Activated T-helper 2 cell treated with anti-CD3 and anti-CD28 coated beads, Interferon-gamma antibody, Interleukin-2, Interleukin-4, amounts not matched to agents 10 μg/mL and 5 μg/mL and 100 μg/mL, durations not matched to agents 14 hours and 24 hours and 36 hours (primary cell): ENCODE measurements at regions of chr21 and their contacts with region 1.

Region 1: DNA sequence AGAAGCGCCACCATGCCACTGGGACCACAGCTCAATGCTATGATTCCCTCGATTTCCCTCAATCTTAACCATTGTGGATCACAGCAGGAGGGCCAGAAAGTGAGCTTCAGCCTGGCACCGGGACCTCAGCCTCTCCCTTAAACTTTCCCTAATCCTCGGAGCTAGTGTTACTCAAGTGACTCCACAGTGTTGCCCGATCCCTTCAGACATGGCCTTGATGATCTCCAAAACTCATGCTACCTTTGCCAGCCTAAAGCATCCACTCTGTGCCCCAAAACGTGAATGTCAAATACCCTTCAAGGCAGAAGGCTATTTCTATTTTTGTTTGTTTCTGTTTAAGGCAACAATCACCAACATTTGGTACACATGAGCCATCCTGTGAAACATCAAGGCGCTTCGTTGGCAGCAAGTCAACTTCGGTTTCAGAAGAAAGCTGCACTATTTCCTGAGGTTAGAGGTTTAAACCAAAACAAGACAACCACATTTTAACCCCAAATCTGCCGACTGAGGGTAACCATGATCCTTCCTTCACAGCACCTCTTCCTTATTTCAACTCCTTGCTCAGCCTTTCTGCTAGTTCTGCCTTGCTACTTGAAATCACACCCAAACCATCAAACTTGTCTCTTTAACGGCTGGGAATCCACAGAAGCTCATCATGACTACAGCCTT is 94.4 kb upstream of the KRTAP19-8 start:
- DNase-seq: peak; percentile 69
- H3K4me3 Mint-ChIP-seq: peak overlapping the region; percentile 70
- H3K27ac Mint-ChIP-seq: peak overlapping the region; percentile 98
- H3K4me1 Mint-ChIP-seq: peaks cover 72% of the 10 kb centered on the region
- H3K27me3 Mint-ChIP-seq: no peaks in the 10 kb centered on the region

Region 2: DNA sequence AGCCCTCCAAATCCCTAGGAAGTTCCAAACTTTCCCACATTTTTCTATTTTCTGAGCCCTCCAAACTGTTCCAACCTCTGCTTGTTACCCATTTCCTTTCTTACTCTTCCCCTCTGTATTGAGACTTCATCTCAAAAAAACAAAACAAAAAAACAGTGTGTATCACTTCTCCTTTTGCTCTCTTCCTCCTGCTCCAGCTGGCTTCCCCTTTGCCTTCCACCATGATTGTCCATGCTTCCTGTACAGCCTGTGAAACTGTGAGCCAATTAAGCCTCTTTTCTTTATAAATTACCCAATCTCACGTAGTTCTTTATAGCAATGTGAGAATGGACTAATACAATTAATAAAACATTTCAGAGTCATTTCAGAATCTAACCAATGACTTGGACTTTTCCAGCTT is 24.8 kb before region 1 on chr21:
- intact Hi-C with region 1: loop called (anchors 1 kb)
- DNase-seq: no peak
- H3K4me3 Mint-ChIP-seq: no peak overlapping the region
- H3K27ac Mint-ChIP-seq: no peak overlapping the region
- H3K4me1 Mint-ChIP-seq: peaks cover 38% of the 10 kb centered on the region
- H3K27me3 Mint-ChIP-seq: no peaks in the 10 kb centered on the region

Region 3: GRCh38 chr21:31161157-31161556 is 28.4 kb after region 1 on chr21:
- intact Hi-C with region 1: loop called (anchors 2 kb)
- DNase-seq: no peak
- H3K4me3 Mint-ChIP-seq: no peak overlapping the region
- H3K27ac Mint-ChIP-seq: no peak overlapping the region
- H3K4me1 Mint-ChIP-seq: peaks cover 58% of the 10 kb centered on the region
- H3K27me3 Mint-ChIP-seq: no peaks in the 10 kb centered on the region

Region 4: GRCh38 chr21:31198575-31198974 is 65.9 kb after region 1 on chr21:
- intact Hi-C with region 1: loop called (anchors 1 kb)
- DNase-seq: no peak
- H3K4me3 Mint-ChIP-seq: no peak overlapping the region
- H3K27ac Mint-ChIP-seq: no peak overlapping the region
- H3K4me1 Mint-ChIP-seq: peaks cover 39% of the 10 kb centered on the region
- H3K27me3 Mint-ChIP-seq: no peaks in the 10 kb centered on the region

Region 5: DNA sequence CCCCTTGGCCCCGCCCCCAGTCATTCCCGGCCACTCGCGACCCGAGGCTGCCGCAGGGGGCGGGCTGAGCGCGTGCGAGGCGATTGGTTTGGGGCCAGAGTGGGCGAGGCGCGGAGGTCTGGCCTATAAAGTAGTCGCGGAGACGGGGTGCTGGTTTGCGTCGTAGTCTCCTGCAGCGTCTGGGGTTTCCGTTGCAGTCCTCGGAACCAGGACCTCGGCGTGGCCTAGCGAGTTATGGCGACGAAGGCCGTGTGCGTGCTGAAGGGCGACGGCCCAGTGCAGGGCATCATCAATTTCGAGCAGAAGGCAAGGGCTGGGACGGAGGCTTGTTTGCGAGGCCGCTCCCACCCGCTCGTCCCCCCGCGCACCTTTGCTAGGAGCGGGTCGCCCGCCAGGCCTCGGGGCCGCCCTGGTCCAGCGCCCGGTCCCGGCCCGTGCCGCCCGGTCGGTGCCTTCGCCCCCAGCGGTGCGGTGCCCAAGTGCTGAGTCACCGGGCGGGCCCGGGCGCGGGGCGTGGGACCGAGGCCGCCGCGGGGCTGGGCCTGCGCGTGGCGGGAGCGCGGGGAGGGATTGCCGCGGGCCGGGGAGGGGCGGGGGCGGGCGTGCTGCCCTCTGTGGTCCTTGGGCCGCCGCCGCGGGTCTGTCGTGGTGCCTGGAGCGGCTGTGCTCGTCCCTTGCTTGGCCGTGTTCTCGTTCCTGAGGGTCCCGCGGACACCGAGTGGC is 527.0 kb after region 1 on chr21 and contains the start of gene SOD1:
- intact Hi-C with region 1: loop called (anchors 1 kb)
- DNase-seq: peak; percentile 96
- H3K4me3 Mint-ChIP-seq: peak within 1 kb of the TSS; percentile 99
- H3K27ac Mint-ChIP-seq: peak within 1 kb of the TSS; percentile 98
- H3K4me1 Mint-ChIP-seq: peaks cover 47% of the 10 kb centered on the region
- H3K27me3 Mint-ChIP-seq: no peaks in the 10 kb centered on the region
- total RNA-seq, gene SOD1: 284 and 286 TPM in 2 replicates

Region 6: GRCh38 chr21:31713973-31714740 is 581.4 kb after region 1 on chr21:
- intact Hi-C with region 1: loop called (anchors 10 kb)
- DNase-seq: no peak
- H3K4me3 Mint-ChIP-seq: no peak overlapping the region
- H3K27ac Mint-ChIP-seq: peak overlapping the region; percentile 87
- H3K4me1 Mint-ChIP-seq: peaks cover 39% of the 10 kb centered on the region
- H3K27me3 Mint-ChIP-seq: no peaks in the 10 kb centered on the region